Esophagus muscularis mucosa (tissue), 4 donors: ENCODE measurements at regions of chr1 and their contacts with region 1.

Region 1: DNA sequence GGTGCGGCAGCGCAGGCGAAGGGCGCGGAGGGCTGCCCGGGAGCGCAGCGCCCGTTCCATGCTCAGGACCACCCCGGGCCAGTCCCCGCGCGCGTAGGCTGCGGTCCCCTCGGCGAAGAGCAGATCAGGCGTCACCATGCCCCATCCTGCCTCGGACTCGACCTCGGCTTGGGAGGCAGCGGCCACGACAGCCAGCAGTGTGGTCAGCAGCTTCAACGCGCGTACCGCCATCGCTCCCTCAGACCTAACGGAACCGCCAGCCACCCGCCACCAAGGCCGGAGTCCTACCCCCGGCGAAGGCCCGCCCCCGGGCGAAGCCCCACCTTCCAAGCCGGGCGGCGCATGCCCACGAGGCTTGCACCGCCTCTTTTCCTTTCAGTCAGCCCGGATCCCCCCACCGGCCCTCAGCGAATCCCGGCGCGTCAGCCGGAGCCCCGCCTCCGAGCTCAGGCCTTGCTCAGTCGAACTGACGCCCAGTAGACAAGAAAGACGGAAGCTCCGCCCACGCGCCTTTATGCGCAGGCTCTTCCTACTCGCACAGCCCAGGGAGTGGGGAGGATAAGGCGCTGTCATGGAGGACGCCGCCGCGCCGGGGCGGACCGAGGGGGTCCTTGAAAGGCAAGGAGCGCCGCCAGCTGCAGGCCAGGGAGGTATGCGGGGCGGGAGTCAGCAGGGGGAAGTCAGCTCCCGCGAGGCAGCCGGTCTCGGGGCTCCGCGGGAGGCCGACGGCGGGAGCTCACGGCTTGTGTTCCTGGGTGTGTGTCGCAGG is at the starts of genes C1orf50 and P3H1:
- DNase-seq: peak; percentile 100
- H3K4me3 ChIP-seq: peak within 1 kb of the TSS; percentile 75 to 96 (median 86)
- H3K27ac ChIP-seq: peak within 1 kb of the TSS; percentile 91 to 96 (median 93)
- H3K4me1 ChIP-seq: peaks cover 37 to 62% (median 53%) of the 10 kb centered on the region in 4 donors
- H3K27me3 ChIP-seq: no peaks in the 10 kb centered on the region
- CTCF ChIP-seq: no peak
- EP300 ChIP-seq: no peak
- POLR2A ChIP-seq: peak; percentile 89
- total RNA-seq, gene C1orf50: 3.0 to 5.0 (median 3.6) TPM
- total RNA-seq, gene P3H1: 19.5 to 33.5 (median 24.9) TPM

Region 2: GRCh38 chr1:42657971-42658879 is 108.7 kb before region 1 on chr1 and contains the start of gene PPIH:
- intact Hi-C with region 1: loop called (anchors 10 kb)
- DNase-seq: peak; percentile 98
- H3K4me3 ChIP-seq: peak within 1 kb of the TSS; percentile 70 to 80 (median 76)
- H3K27ac ChIP-seq: peak within 1 kb of the TSS; percentile 74 to 79 (median 78)
- H3K4me1 ChIP-seq: peaks cover 16 to 21% (median 17%) of the 10 kb centered on the region in 4 donors
- H3K27me3 ChIP-seq: no peaks in the 10 kb centered on the region
- CTCF ChIP-seq: peak; percentile 20 to 51 (median 37)
- EP300 ChIP-seq: no peak
- POLR2A ChIP-seq: no peak
- total RNA-seq, gene PPIH: 12.5 to 17.2 (median 15.0) TPM

Region 3: DNA sequence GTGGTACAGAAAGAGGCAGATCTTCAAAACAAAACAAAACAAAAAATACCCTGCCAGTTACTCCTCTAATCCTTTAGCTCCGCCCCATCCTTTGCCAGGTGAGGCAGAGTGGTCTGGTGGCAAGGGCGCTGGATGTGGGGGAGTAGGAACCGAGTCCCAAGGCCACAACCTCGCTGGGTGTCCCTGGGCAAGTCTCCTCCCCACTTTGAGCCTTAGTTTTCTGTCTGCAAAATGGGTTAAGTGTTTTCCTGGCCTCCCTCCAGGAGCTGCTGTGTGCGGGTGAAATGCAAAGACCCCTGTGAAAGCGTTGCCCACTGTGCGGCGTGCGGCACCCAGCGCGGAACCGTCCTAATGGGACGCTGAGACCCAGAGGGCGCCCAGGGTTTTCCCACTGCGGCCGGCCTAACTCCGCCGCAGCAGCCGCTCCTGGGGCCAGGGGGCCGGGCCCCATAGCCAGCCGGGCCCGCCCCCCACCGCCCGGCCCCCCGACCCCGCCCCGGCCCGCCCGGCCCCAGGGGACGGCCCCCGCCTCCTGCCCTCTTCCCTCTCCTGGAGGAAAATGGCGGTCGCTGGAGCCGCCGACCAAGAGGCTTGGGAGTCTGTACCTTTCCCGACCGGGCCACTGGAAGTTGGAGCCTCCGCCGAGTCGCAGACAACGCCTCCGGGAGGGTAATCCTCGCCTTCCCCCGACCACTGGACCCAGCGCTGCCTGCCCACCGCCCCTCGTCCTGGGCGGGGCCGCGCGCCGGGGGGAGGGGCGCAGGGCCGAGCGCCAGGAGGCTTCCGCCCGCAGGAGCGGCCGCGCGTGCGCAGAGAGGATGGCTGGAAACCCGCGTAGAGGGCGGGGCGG is 49.9 kb after region 1 on chr1 and contains the starts of genes ERMAP and SVBP:
- intact Hi-C with region 1: loop called (anchors 5 kb)
- DNase-seq: peak; percentile 97
- H3K4me3 ChIP-seq: peak within 1 kb of the TSS; percentile 69 to 88 (median 77)
- H3K27ac ChIP-seq: peak within 1 kb of the TSS; percentile 95 to 98 (median 97)
- H3K4me1 ChIP-seq: peaks cover 14 to 32% (median 28%) of the 10 kb centered on the region in 4 donors
- H3K27me3 ChIP-seq: no peaks in the 10 kb centered on the region
- CTCF ChIP-seq: no peak
- EP300 ChIP-seq: no peak
- POLR2A ChIP-seq: no peak
- total RNA-seq, gene ERMAP: 5.8 to 14.1 (median 9.1) TPM
- total RNA-seq, gene SVBP: 19.1 to 39.5 (median 23.1) TPM

Region 4: DNA sequence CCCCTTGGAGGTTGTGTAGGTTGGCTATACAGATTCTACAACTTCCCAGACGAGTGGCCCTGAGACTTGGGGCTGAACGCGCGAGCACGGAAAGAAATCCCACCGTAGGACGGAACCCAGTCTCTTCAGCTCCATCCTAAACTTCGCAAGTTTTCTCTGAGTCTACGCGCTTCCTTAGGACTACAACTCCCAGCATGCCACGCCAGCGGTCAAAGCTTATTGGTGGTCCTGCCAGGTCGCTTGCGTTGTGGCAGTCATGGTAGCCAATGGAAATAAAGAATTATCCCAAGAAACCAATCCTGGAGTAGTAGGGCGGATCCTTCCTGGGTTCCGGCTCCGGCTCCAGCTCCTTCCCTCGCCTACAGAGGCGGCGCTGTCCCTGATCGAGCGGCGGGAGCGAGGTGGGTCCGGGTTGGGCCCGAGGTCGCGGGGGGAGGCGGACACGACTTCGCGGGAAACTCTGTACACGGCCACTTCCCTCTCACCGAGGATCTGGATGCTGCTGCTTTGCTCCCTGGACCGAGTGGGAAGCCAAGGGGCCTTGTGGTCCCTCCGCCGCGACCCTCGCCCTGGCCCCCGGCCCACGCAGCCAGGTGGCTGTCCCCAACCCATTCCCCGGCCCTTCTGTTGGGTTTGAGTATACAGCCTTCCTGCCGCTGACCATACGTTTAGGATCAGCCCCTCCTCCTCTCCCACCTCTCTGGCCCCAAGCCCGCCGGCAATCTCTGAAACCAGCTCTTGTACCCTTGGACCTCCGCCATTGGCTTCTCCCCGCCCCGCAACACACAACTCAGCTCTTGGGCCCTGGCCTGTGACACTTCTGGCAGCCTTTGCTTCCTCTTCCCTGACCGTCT is 79.6 kb after region 1 on chr1 and contains the start of gene ZNF691:
- intact Hi-C with region 1: loop called (anchors 10 kb)
- DNase-seq: peak; percentile 99
- H3K4me3 ChIP-seq: peak within 1 kb of the TSS; percentile 68 to 97 (median 82)
- H3K27ac ChIP-seq: peak within 1 kb of the TSS; percentile 74 to 84 (median 82)
- H3K4me1 ChIP-seq: peaks cover 15 to 24% (median 18%) of the 10 kb centered on the region in 4 donors
- H3K27me3 ChIP-seq: no peaks in the 10 kb centered on the region
- CTCF ChIP-seq: peak; percentile 36 to 58 (median 55)
- EP300 ChIP-seq: no peak
- POLR2A ChIP-seq: peak; percentile 38
- total RNA-seq, gene ZNF691: 10.0 to 14.2 (median 12.7) TPM

Region 5: GRCh38 chr1:42924082-42924850 is 157.3 kb after region 1 on chr1:
- intact Hi-C with region 1: loop called (anchors 10 kb)
- DNase-seq: peak; percentile 99
- H3K4me3 ChIP-seq: peak overlapping the region; percentile 66 to 96 (median 86)
- H3K27ac ChIP-seq: peak overlapping the region; percentile 92 to 98 (median 94)
- H3K4me1 ChIP-seq: peaks cover 5 to 20% (median 16%) of the 10 kb centered on the region in 4 donors
- H3K27me3 ChIP-seq: no peaks in the 10 kb centered on the region
- CTCF ChIP-seq: peak in 1 of 3 experiments; percentile 34
- EP300 ChIP-seq: no peak
- POLR2A ChIP-seq: peak; percentile 33